Naive thymus-derived CD4-positive, alpha-beta T cell (primary cell): ENCODE measurements at regions of chr6 and their contacts with region 1.

Region 1: DNA sequence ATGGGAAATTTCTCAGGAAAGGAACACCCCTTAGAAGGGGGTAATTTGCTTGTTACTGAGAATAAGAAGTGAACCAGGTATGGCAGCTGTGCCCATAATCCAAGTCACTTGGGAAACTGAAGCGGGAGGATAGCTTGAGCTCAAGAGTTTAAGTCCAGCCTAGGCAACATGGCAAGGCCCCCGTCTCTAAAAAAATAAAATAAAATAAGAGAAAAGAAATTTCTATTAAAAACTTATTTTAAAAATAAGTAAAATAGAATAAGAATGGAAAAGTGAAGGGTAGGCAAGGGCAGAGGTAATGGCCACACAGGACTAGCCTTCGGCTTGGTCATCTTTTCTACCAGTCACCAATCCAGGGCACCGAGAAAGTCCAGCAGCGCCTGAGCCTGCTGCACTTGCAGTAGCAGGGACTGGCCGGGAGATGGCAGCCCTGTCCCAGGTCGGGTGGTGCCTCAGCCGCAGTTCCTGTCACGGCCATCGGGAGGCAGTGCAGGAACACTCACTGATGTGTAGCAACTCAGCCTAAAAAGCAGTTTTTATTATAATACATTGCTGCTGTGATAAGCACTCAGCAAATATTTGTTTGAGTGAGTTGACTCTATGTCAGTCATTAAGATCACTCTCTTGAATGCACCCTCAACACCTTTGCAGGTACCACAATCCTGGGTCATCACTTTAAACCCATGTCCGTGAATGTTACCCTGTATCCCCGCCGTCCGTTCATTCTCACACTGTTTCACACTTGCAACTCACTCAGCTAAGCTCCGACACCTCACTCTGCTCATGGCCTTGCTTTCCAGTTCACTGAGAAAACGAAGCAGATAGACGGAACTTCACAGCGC is 23.2 kb upstream of the GCM1 start:
- DNase-seq: peak; percentile 76 to 95 (median 87)
- ATAC-seq: peak; percentile 100
- H3K4me3 ChIP-seq: no peak overlapping the region
- H3K4me3 Mint-ChIP-seq: no peak overlapping the region
- H3K27ac ChIP-seq: no peak overlapping the region
- H3K27ac Mint-ChIP-seq: no peak overlapping the region
- H3K4me1 ChIP-seq: no peaks in the 10 kb centered on the region
- H3K4me1 Mint-ChIP-seq: peaks cover 0 to 6% (median 0%) of the 10 kb centered on the region in 7 donors
- H3K27me3 ChIP-seq: no peaks in the 10 kb centered on the region
- H3K27me3 Mint-ChIP-seq: peaks cover 0 to 3% (median 0%) of the 10 kb centered on the region in 5 donors

Region 2: GRCh38 chr6:53263917-53264316 is 92.1 kb after region 1 on chr6:
- CTCF ChIA-PET with region 1: interaction called, 3 read pairs
- POLR2A ChIA-PET with region 1: interaction called, 6 read pairs
- intact Hi-C with region 1: loop called in 1 of 2 experiments (anchors 10 kb)
- DNase-seq: no peak
- ATAC-seq: no peak
- H3K4me3 ChIP-seq: no peak overlapping the region
- H3K4me3 Mint-ChIP-seq: no peak overlapping the region
- H3K27ac ChIP-seq: no peak overlapping the region
- H3K27ac Mint-ChIP-seq: peak overlapping the region in 1 of 9 donors; percentile 8
- H3K4me1 ChIP-seq: no peaks in the 10 kb centered on the region
- H3K4me1 Mint-ChIP-seq: peaks cover 0 to 9% (median 0%) of the 10 kb centered on the region in 7 donors
- H3K27me3 ChIP-seq: no peaks in the 10 kb centered on the region
- H3K27me3 Mint-ChIP-seq: no peaks in the 10 kb centered on the region

Region 3: GRCh38 chr6:53410508-53411258 is 238.9 kb after region 1 on chr6:
- CTCF ChIA-PET with region 1: interaction called, 97 read pairs
- POLR2A ChIA-PET with region 1: interaction called, 3 read pairs
- intact Hi-C with region 1: loop called (anchors 1 kb)
- DNase-seq: peak; percentile 21 to 72 (median 63)
- ATAC-seq: peak; percentile 98
- H3K4me3 ChIP-seq: no peak overlapping the region
- H3K4me3 Mint-ChIP-seq: no peak overlapping the region
- H3K27ac ChIP-seq: no peak overlapping the region
- H3K27ac Mint-ChIP-seq: peak overlapping the region in 1 of 9 donors; percentile 22
- H3K4me1 ChIP-seq: peaks cover 0 to 3% of the 10 kb centered on the region in 2 donors
- H3K4me1 Mint-ChIP-seq: peaks cover 0 to 6% (median 3%) of the 10 kb centered on the region in 7 donors
- H3K27me3 ChIP-seq: no peaks in the 10 kb centered on the region
- H3K27me3 Mint-ChIP-seq: peaks cover 0 to 5% (median 0%) of the 10 kb centered on the region in 5 donors

Region 4: DNA sequence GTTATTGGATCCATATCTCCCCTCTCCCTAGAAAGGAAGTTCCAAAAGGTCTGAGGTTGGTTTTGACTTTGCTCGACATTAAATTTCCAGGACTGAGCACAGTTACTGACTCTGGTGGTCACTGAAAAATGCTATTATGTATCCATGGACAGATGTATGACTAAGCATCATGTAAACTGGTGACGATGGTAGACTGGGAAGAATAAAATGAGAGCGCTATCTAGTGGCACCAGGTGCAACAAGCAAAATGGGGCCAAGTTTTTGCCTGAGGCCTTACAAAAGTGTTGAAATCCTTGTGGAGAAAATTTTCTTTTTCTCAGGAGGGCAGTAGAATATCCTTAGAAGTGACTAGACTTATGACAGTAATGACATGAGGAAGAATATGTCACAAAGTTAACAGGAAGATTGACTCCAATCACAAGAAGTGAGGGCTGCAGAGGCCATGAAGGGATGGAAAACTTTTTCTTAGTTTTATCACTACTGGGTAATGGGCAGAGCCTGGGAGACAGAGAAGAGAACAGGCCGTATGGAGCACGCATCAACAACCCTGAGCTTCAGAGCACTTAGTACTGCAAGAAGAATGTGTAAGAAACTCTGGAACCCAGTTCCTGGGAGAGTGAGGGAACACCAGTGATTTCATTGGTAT is 265.9 kb after region 1 on chr6:
- CTCF ChIA-PET with region 1: interaction called, 11 read pairs
- POLR2A ChIA-PET with region 1: no interaction called
- intact Hi-C with region 1: loop called (anchors 1 kb)
- DNase-seq: peak in 5 of 9 donors; percentile 11 to 34 (median 31)
- ATAC-seq: peak; percentile 78
- H3K4me3 ChIP-seq: no peak overlapping the region
- H3K4me3 Mint-ChIP-seq: no peak overlapping the region
- H3K27ac ChIP-seq: no peak overlapping the region
- H3K27ac Mint-ChIP-seq: no peak overlapping the region
- H3K4me1 ChIP-seq: no peaks in the 10 kb centered on the region
- H3K4me1 Mint-ChIP-seq: peaks cover 0 to 6% (median 0%) of the 10 kb centered on the region in 7 donors
- H3K27me3 ChIP-seq: no peaks in the 10 kb centered on the region
- H3K27me3 Mint-ChIP-seq: peaks cover 0 to 9% (median 3%) of the 10 kb centered on the region in 5 donors

Region 5: GRCh38 chr6:53725791-53726431 is 554.1 kb after region 1 on chr6:
- CTCF ChIA-PET with region 1: interaction called, 3 read pairs
- POLR2A ChIA-PET with region 1: no interaction called
- intact Hi-C with region 1: loop called (anchors 5 kb)
- DNase-seq: peak; percentile 46 to 79 (median 63)
- ATAC-seq: peak; percentile 95
- H3K4me3 ChIP-seq: no peak overlapping the region
- H3K4me3 Mint-ChIP-seq: peak overlapping the region in 1 of 10 donors; percentile 59
- H3K27ac ChIP-seq: no peak overlapping the region
- H3K27ac Mint-ChIP-seq: peak overlapping the region in 1 of 9 donors; percentile 63
- H3K4me1 ChIP-seq: no peaks in the 10 kb centered on the region
- H3K4me1 Mint-ChIP-seq: peaks cover 0 to 14% (median 4%) of the 10 kb centered on the region in 7 donors
- H3K27me3 ChIP-seq: no peaks in the 10 kb centered on the region
- H3K27me3 Mint-ChIP-seq: peaks cover 15 to 24% (median 22%) of the 10 kb centered on the region in 5 donors

Region 6: GRCh38 chr6:54291738-54292137 is 1119.9 kb after region 1 on chr6:
- CTCF ChIA-PET with region 1: no interaction called
- POLR2A ChIA-PET with region 1: no interaction called
- intact Hi-C with region 1: no loop called
- DNase-seq: no peak
- ATAC-seq: no peak
- H3K4me3 ChIP-seq: no peak overlapping the region
- H3K4me3 Mint-ChIP-seq: no peak overlapping the region
- H3K27ac ChIP-seq: no peak overlapping the region
- H3K27ac Mint-ChIP-seq: no peak overlapping the region
- H3K4me1 ChIP-seq: no peaks in the 10 kb centered on the region
- H3K4me1 Mint-ChIP-seq: no peaks in the 10 kb centered on the region
- H3K27me3 ChIP-seq: no peaks in the 10 kb centered on the region
- H3K27me3 Mint-ChIP-seq: no peaks in the 10 kb centered on the region